HCT116 (cell line): ENCODE measurements at regions of chr16 and their contacts with region 1.

Region 1: DNA sequence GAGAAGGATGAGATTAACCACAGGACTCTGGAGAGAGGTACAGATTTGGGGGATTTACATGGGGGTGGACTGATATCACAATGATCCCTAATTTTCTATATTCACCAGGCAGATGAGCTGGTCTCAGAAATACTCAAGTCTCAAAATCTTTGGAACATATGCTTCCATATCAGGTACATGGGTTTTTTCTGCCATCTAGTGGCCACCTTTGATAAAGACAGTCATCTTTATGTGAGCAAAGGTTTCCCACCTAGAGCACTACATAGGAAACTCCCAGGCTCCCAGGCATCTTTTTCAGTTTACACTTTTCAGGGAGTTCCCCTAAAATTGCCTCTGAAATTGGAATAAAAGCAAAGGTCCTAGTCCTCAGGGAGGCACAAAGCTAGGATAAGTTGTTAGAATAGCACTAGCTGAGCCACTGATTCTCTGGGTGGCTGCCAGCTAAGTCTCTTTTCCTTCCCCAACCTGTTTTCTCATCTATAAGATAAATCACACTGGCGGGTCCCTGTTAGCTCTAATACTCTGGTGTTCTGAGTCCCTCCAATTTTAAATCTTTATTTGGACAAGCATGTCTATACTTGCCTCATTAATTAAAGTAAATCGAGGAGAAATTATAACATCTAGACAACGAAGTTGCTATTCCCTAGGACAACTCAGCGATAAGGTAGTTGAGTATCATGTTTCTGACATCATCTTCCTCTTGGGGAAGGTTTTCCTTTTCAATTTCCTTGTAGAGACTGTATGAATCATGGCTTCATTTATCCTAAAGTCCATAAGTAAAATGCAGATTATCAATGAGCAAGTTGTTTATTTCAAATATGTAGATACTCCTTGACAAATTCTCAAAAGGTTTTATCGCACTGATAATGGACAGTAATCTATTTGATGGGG is 19.0 kb upstream of the MON1B start:
- DNase-seq: peak; percentile 49
- ATAC-seq: peak; percentile 87
- H3K4me3 ChIP-seq: no peak overlapping the region
- H3K27ac ChIP-seq: no peak overlapping the region
- H3K4me1 ChIP-seq: no peaks in the 10 kb centered on the region
- H3K27me3 ChIP-seq: peaks cover 11% of the 10 kb centered on the region; the same call in 1 of the 2 replicates
- CTCF ChIP-seq: peak; percentile 51 to 76 (median 62)
- POLR2A ChIP-seq: no peak
- RAD21 ChIP-seq: peak; percentile 78

Region 2: GRCh38 chr16:75647492-75648264 is 1524.3 kb before region 1 on chr16 and contains the starts of genes KARS1 and TERF2IP:
- CTCF ChIA-PET with region 1: interaction called, 3 read pairs
- POLR2A ChIA-PET with region 1: interaction called, 3 read pairs
- RAD21 ChIA-PET with region 1: no interaction called
- intact Hi-C with region 1: loop called (anchors 5 kb)
- DNase-seq: peak; percentile 82
- ATAC-seq: peak; percentile 94
- H3K4me3 ChIP-seq: peak within 1 kb of the TSS; percentile 90 to 94
- H3K27ac ChIP-seq: peak within 1 kb of the TSS; percentile 89
- H3K4me1 ChIP-seq: peaks cover 8 to 28% of the 10 kb centered on the region in 2 experiments
- H3K27me3 ChIP-seq: no peaks in the 10 kb centered on the region
- CTCF ChIP-seq: no peak
- POLR2A ChIP-seq: peak; percentile 93
- RAD21 ChIP-seq: no peak
- total RNA-seq, gene KARS1: 196 TPM
- total RNA-seq, gene TERF2IP: 36.4 TPM

Region 3: DNA sequence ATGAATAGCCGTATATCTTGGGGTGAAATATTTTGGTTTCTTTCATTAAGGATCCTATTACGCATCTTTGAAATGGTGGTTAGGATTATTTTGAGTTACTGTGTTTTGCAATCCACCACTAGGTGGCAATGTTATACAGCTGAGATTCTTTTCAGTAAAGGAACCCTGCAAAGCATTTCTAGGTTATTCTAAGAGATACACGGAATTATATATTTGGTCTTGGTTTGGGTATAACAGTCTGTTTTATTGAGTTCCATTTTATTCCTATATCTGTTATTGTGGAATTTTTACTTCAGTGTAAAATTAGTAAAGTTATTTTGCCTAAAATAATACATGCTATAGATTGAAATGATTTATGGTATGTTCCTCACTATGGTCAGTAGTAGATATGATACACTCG is 1382.8 kb before region 1 on chr16:
- CTCF ChIA-PET with region 1: interaction called, 12 read pairs
- POLR2A ChIA-PET with region 1: no interaction called
- RAD21 ChIA-PET with region 1: interaction called in 1 of 2 experiments, 4 read pairs
- intact Hi-C with region 1: loop called (anchors 1 kb)
- DNase-seq: peak; percentile 46
- ATAC-seq: peak; percentile 77
- H3K4me3 ChIP-seq: no peak overlapping the region
- H3K27ac ChIP-seq: no peak overlapping the region
- H3K4me1 ChIP-seq: no peaks in the 10 kb centered on the region
- H3K27me3 ChIP-seq: peaks cover 5% of the 10 kb centered on the region; the same call in 1 of the 2 replicates
- CTCF ChIP-seq: peak; percentile 57 to 88 (median 72); a peak in 5 of 6 replicates
- POLR2A ChIP-seq: no peak
- RAD21 ChIP-seq: peak; percentile 87

Region 4: GRCh38 chr16:75801307-75801706 is 1370.7 kb before region 1 on chr16:
- CTCF ChIA-PET with region 1: interaction called, 47 read pairs
- POLR2A ChIA-PET with region 1: no interaction called
- RAD21 ChIA-PET with region 1: no interaction called
- intact Hi-C with region 1: loop called (anchors 5 kb)
- DNase-seq: no peak
- ATAC-seq: no peak
- H3K4me3 ChIP-seq: no peak overlapping the region
- H3K27ac ChIP-seq: no peak overlapping the region
- H3K4me1 ChIP-seq: no peaks in the 10 kb centered on the region
- H3K27me3 ChIP-seq: peaks cover 16% of the 10 kb centered on the region
- CTCF ChIP-seq: peak in 2 of 3 experiments; percentile 29 to 42; a peak in 3 of 6 replicates
- POLR2A ChIP-seq: no peak
- RAD21 ChIP-seq: peak; percentile 57

Region 5: DNA sequence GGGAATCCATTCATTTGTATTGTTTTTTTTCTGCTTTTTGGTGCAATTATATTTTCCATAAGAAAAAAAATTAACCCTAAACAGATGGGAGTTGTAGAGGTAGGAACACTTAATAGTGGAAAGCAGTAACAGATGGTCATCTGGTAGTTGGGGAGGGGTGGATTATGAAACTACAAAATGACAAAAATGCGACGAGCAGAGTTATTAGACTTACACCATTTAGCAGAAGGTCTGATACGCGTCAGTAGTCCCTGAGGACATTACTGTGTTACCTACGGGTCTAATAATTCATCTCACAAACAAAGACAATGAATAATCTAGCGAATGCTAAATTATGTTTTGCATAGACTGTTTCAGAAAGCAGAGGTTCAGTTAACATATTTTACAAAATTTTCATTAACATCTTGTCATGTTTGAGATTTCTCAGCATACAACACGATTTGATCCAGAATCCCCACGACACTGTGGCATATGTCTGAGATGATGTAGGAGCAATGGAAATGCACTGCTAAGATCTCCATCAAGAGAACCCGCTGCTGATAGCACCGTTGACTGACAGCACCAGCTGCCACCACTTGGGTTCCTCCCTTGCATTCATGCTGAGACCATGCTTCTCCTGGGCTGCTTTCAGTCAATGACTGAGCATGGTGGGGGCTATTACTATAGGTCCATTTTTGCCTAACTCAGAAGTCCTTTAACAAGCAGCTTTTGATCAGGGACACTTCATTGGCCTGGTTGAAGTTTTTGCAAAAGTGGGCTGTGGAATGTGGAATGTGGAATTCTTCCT is 1263.5 kb before region 1 on chr16:
- CTCF ChIA-PET with region 1: no interaction called
- POLR2A ChIA-PET with region 1: no interaction called
- RAD21 ChIA-PET with region 1: no interaction called
- intact Hi-C with region 1: loop called (anchors 5 kb)
- DNase-seq: no peak
- ATAC-seq: no peak
- H3K4me3 ChIP-seq: no peak overlapping the region
- H3K27ac ChIP-seq: no peak overlapping the region
- H3K4me1 ChIP-seq: no peaks in the 10 kb centered on the region
- H3K27me3 ChIP-seq: no peaks in the 10 kb centered on the region; the same call in 1 of the 2 replicates
- CTCF ChIP-seq: no peak
- POLR2A ChIP-seq: no peak
- RAD21 ChIP-seq: no peak

Region 6: GRCh38 chr16:77183137-77183536 is 11.1 kb after region 1 on chr16:
- CTCF ChIA-PET with region 1: interaction called, 16 read pairs
- POLR2A ChIA-PET with region 1: no interaction called
- RAD21 ChIA-PET with region 1: no interaction called
- intact Hi-C with region 1: no loop called
- DNase-seq: no peak
- ATAC-seq: no peak
- H3K4me3 ChIP-seq: no peak overlapping the region
- H3K27ac ChIP-seq: no peak overlapping the region
- H3K4me1 ChIP-seq: peaks cover 0 to 15% of the 10 kb centered on the region in 2 experiments; a peak in 2 of 4 replicates
- H3K27me3 ChIP-seq: no peaks in the 10 kb centered on the region
- CTCF ChIP-seq: no peak
- POLR2A ChIP-seq: no peak
- RAD21 ChIP-seq: no peak